Panc1 (cell line): ENCODE measurements at regions of chr1 and their contacts with region 1.

Region 1: DNA sequence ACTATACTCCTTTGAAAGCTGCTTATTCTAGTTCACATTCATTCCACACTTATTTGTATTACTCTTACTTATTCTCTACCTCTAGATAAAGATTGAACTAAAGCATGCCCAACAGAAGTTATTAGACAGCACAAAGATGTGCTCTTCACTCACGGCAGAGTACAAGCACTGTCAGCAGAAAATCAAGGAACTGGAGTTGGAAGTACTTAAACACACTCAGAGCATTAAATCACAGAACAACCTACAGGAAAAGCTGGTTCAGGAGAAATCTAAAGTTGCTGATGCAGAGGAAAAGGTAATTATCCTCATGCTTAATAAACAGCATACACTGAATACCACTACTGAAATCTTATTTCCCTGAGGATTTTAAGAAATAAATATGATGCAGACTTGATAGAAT is 81.3 kb upstream of the PPIH start:
- DNase-seq: no peak
- ATAC-seq: no peak
- H3K4me3 ChIP-seq: no peak overlapping the region
- H3K27ac ChIP-seq: no peak overlapping the region
- H3K4me1 ChIP-seq: no peaks in the 10 kb centered on the region
- H3K27me3 ChIP-seq: peaks cover 2% of the 10 kb centered on the region
- CTCF ChIP-seq: no peak

Region 2: GRCh38 chr1:42593486-42594100 is 16.7 kb after region 1 on chr1:
- CTCF ChIA-PET with region 1: no interaction called
- POLR2A ChIA-PET with region 1: no interaction called
- in situ Hi-C with region 1: no loop called
- intact Hi-C with region 1: no loop called
- DNase-seq: no peak
- ATAC-seq: no peak
- H3K4me3 ChIP-seq: no peak overlapping the region
- H3K27ac ChIP-seq: no peak overlapping the region
- H3K4me1 ChIP-seq: no peaks in the 10 kb centered on the region
- H3K27me3 ChIP-seq: peaks cover 3% of the 10 kb centered on the region; the same call in 1 of the 2 replicates
- CTCF ChIP-seq: no peak

Region 3: DNA sequence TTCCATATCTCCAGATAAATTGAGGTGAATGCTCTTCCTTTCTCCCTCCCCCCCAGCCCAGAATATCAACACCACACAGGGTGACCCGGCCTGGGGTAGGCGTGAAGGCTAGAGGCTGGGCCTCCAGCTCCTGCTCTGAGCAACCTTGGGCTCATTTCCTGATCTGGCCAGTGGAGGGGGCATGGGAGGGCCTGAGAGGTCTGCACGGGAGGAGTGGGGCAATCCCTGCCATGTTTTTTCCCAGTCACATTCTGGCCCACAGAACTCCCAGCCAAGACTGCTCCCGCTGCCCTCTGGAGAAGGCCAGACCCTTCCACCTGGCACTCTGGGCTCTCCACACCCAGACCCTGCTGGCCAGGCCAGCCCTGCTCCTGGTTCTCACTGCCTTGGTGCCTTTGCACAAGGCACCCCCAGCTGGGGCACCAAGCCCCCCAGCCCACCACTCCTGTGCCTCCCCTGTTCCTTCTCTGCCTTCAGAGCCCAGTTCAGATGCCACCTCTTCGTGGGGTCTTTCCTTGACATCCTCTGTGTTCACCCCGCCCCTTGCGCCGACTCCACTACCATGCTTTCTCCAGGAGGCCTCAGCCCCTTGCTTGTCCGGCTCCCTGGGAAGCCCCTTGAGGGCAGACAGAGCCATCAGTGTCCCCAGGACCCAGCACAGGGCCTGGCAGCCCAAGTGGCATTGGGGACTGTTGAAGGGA is 159.4 kb after region 1 on chr1:
- CTCF ChIA-PET with region 1: no interaction called
- POLR2A ChIA-PET with region 1: no interaction called
- in situ Hi-C with region 1: no loop called
- intact Hi-C with region 1: loop called (anchors 10 kb)
- DNase-seq: no peak
- ATAC-seq: peak; percentile 75
- H3K4me3 ChIP-seq: no peak overlapping the region
- H3K27ac ChIP-seq: no peak overlapping the region
- H3K4me1 ChIP-seq: no peaks in the 10 kb centered on the region
- H3K27me3 ChIP-seq: no peaks in the 10 kb centered on the region
- CTCF ChIP-seq: no peak